ENCODE measurements at regions of chr1 and their contacts with region 1.

Region 1: DNA sequence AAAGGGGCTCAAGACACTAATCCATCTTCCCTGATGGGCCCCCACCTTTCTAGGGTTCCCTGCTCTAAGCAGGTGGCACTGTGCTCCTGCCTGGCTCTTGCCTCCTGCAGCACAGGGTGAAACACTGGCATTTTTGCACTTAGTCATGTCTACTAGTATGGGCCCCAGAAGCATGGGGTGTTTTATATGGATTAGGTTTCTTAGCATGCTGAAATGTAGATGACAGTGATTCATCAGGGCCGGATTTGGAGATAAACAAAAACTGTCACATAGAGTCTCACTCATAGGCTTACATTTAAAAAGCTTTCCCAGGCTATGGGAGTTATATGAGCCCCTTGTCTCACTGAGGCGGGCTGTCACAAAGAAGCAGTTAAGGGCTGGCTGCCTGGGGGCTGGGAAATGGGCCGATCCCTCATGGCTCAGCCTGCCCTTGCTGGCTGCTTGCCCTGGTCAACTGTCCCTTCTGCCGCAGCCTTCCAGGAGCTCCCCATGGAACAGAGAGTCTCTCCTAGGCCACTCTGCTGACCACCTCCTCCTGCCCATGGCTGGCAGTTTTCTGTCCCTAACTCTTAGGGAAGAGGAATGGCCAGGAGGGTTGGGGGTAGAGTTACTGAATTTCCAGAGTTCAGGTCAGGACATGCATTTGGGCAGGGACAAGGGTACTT is 6.5 kb downstream of the GALNT2 start:
- DNase-seq: peak; percentile 78 to 85
- ATAC-seq: peak; percentile 84 to 90
- H3K4me3 ChIP-seq: peak overlapping the region in 1 of 4 donors; percentile 26
- H3K27ac ChIP-seq: peak overlapping the region; percentile 95 to 97 (median 97)
- H3K4me1 ChIP-seq: peaks cover 89% of the 10 kb centered on the region in 2 donors
- H3K27me3 ChIP-seq: no peaks in the 10 kb centered on the region
- CTCF ChIP-seq: peak in 1 of 5 experiments; percentile 14
- POLR2A ChIP-seq: peak; percentile 48 to 84

Region 2: GRCh38 chr1:230104395-230105244 is 31.1 kb after region 1 on chr1:
- in situ Hi-C with region 1: no loop called
- intact Hi-C with region 1: no loop called
- DNase-seq: peak; percentile 98 to 100
- ATAC-seq: peak; percentile 89 to 93
- H3K4me3 ChIP-seq: peak overlapping the region; percentile 5 to 25 (median 15)
- H3K27ac ChIP-seq: peak overlapping the region; percentile 83 to 89 (median 84)
- H3K4me1 ChIP-seq: peaks cover 54 to 57% of the 10 kb centered on the region in 2 donors
- H3K27me3 ChIP-seq: no peaks in the 10 kb centered on the region
- CTCF ChIP-seq: peak in 3 of 5 experiments; percentile 14 to 45 (median 25)
- POLR2A ChIP-seq: peak in 1 of 2 donors; percentile 33

Region 3: GRCh38 chr1:230163205-230163604 is 89.7 kb after region 1 on chr1:
- in situ Hi-C with region 1: no loop called
- intact Hi-C with region 1: loop called (anchors 2 kb)
- DNase-seq: peak; percentile 61 to 81
- ATAC-seq: peak; percentile 62 to 64
- H3K4me3 ChIP-seq: no peak overlapping the region
- H3K27ac ChIP-seq: peak overlapping the region; percentile 81 to 91 (median 82)
- H3K4me1 ChIP-seq: peaks cover 68 to 80% of the 10 kb centered on the region in 2 donors
- H3K27me3 ChIP-seq: no peaks in the 10 kb centered on the region
- CTCF ChIP-seq: no peak
- POLR2A ChIP-seq: no peak

Region 4: DNA sequence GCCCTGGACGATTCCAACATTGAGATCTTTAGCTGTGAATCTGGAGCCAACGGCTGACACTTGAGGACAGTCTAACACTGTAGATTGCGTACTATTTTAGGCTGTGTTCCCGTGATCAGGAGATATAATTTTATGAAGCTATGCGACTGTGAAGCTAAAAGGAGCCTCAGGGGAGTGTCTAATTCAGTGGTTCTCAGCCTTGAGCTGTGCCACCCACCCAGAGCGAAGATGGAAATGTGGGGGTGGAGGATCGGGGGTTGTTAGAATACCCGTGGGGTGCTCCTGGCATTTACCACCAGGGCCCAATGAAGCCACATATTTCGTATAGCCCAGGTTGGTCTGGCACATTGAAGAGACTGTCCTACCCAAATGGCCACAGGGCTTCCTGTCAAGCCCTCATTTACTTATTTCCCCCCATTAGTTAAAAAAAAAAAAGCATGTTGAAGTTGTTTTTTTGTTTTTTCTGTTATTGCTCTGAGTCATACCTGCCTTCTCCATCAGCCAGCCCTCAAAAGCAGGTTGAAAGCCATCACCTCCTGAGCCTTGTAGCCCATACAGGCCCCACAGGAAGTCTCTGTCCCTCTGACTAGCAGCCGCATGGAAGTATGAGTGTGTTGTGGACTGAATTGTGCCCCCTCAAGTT is 135.2 kb after region 1 on chr1:
- in situ Hi-C with region 1: loop called in 3 of 4 experiments (anchors 5 to 10 kb)
- intact Hi-C with region 1: no loop called
- DNase-seq: peak; percentile 67 to 76
- ATAC-seq: peak; percentile 83 to 87
- H3K4me3 ChIP-seq: no peak overlapping the region
- H3K27ac ChIP-seq: peak overlapping the region; percentile 85 to 92 (median 88)
- H3K4me1 ChIP-seq: peaks cover 74 to 89% of the 10 kb centered on the region in 2 donors
- H3K27me3 ChIP-seq: no peaks in the 10 kb centered on the region
- CTCF ChIP-seq: peak in 1 of 5 experiments; percentile 16
- POLR2A ChIP-seq: peak; percentile 40 to 71

Region 5: GRCh38 chr1:230359992-230360668 is 286.6 kb after region 1 on chr1:
- in situ Hi-C with region 1: no loop called
- intact Hi-C with region 1: no loop called
- DNase-seq: no peak
- ATAC-seq: no peak
- H3K4me3 ChIP-seq: no peak overlapping the region
- H3K27ac ChIP-seq: no peak overlapping the region
- H3K4me1 ChIP-seq: no peaks in the 10 kb centered on the region
- H3K27me3 ChIP-seq: no peaks in the 10 kb centered on the region
- CTCF ChIP-seq: no peak
- POLR2A ChIP-seq: no peak

Measured in gastrocnemius medialis (tissue), 4 donors.